Colonic mucosa (tissue), 4 donors: ENCODE measurements at regions of chr4 and their contacts with region 1.

Region 1: DNA sequence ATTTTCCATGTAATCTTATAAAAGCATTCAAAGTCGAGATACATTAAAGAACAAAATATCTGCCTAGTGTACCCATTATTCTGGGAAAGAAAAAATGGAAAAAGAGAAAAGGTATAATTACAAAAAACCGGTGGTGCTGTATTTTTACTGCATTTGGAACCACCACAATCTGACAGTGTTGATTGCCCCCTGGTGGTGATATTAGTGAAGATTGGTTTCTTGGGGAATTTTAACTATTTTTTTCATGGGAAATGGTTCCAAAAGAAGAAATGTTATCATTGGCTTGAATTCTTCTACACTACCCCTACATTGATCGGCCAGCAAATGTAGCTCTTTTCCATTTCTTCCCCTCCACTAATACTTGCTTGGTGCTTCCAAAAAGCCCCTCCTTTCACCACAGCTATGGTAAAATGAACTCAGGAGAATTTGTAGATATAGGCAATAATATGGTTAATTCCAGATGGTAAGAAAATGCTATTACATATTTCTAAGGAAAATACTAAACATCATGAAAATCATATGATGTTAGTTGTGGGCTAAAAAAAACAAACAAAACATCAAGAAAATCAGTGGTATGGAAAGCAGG is 50.0 kb downstream of the COX18 start:
- DNase-seq: no peak
- H3K4me3 ChIP-seq: no peak overlapping the region
- H3K27ac ChIP-seq: no peak overlapping the region
- H3K4me1 ChIP-seq: no peaks in the 10 kb centered on the region
- H3K27me3 ChIP-seq: no peaks in the 10 kb centered on the region
- CTCF ChIP-seq: peak; percentile 62

Region 2: DNA sequence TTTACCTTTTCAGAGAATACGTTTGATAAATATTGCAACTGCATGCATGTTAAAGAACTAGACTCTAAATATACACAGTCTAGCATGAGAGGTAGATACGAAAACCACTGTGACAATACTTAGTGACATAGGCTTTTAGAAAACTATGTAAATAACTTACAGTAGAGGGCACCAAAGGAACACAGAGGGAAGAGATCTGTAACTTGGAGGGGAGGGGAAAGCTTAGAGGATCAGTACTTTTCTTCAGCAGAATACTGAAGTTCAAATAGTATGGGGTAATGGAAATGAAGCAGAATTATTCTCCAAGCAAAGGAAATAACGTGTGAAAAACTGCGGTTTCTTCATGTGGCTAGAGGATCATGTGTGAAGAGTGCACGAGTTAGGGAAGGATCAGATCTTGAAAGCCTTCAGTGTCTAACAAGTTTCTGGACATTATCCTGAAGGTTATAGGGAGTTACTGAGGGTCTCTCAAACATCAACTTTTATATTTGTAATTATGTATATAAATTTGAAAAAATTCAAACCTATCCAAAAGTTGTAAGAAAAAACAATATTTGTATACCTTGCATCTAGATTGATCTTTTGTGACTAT is 723.5 kb before region 1 on chr4:
- intact Hi-C with region 1: loop called (anchors 10 kb)
- DNase-seq: no peak
- H3K4me3 ChIP-seq: no peak overlapping the region
- H3K27ac ChIP-seq: no peak overlapping the region
- H3K4me1 ChIP-seq: no peaks in the 10 kb centered on the region
- H3K27me3 ChIP-seq: no peaks in the 10 kb centered on the region
- CTCF ChIP-seq: peak; percentile 31

Region 3: GRCh38 chr4:72500214-72500613 is 519.3 kb before region 1 on chr4:
- intact Hi-C with region 1: loop called (anchors 5 kb)
- DNase-seq: no peak
- H3K4me3 ChIP-seq: no peak overlapping the region
- H3K27ac ChIP-seq: no peak overlapping the region
- H3K4me1 ChIP-seq: no peaks in the 10 kb centered on the region
- H3K27me3 ChIP-seq: no peaks in the 10 kb centered on the region
- CTCF ChIP-seq: no peak

Region 4: DNA sequence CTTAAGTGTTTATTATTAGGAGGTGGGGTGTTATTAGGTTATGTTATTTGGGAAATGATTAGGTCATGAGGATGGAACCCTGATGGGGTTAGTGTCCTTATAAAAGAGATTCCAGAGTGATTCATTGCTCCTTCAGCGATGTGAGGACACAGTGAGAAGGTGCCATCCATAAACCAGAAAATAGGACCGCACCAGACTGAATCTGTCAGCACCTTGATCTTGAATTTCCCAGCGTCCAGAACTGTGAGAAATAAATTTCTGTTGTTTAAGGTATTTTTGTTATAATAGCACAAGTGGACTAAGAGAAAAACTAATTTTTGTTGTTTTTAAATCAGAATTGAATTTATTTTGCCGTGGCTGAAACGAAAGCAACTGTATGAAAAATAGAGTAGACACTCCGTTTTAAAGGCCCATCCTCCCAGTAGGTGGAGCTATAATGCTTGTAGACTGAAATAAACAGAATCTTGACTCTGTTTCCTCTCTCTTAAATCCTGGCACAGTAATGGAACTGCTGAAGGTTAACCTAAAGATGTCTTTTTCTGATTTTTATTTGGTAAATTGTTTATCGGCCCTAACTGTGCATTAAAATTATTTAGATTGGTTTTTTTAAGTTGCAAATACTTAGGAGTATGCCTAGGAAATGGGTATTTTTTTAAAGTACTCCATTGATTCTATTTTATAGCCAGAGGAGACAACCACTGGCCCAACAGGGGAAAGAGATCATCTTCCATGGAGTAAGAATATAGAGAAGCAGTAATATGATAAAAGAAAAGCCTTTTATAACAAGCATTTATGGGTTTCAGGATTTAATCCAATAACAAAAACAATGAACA is 317.4 kb before region 1 on chr4:
- intact Hi-C with region 1: loop called (anchors 5 kb)
- DNase-seq: peak; percentile 25
- H3K4me3 ChIP-seq: peak overlapping the region; percentile 21
- H3K27ac ChIP-seq: no peak overlapping the region
- H3K4me1 ChIP-seq: no peaks in the 10 kb centered on the region
- H3K27me3 ChIP-seq: no peaks in the 10 kb centered on the region
- CTCF ChIP-seq: peak; percentile 24

Region 5: GRCh38 chr4:73103799-73104503 is 84.4 kb after region 1 on chr4:
- intact Hi-C with region 1: no loop called
- DNase-seq: no peak
- H3K4me3 ChIP-seq: no peak overlapping the region
- H3K27ac ChIP-seq: no peak overlapping the region
- H3K4me1 ChIP-seq: no peaks in the 10 kb centered on the region
- H3K27me3 ChIP-seq: no peaks in the 10 kb centered on the region
- CTCF ChIP-seq: no peak